Activated CD4-positive, alpha-beta memory T cell treated with anti-CD3 and anti-CD28 coated beads for 36 hours (primary cell): ENCODE measurements at regions of chr6 and their contacts with region 1.

Region 1: GRCh38 chr6:134247231-134247833 is 70.6 kb downstream of the SGK1 start:
- DNase-seq: peak; percentile 86
- H3K4me3 Mint-ChIP-seq: peak overlapping the region; percentile 20
- H3K27ac Mint-ChIP-seq: peak overlapping the region; percentile 86
- H3K4me1 Mint-ChIP-seq: peaks cover 51% of the 10 kb centered on the region
- H3K27me3 Mint-ChIP-seq: no peaks in the 10 kb centered on the region

Region 2: GRCh38 chr6:133952815-133953633 is 294.3 kb before region 1 on chr6 and contains the start of gene TBPL1:
- CTCF ChIA-PET with region 1: no interaction called
- POLR2A ChIA-PET with region 1: no interaction called
- intact Hi-C with region 1: loop called (anchors 2 kb)
- DNase-seq: peak; percentile 93
- H3K4me3 Mint-ChIP-seq: peak within 1 kb of the TSS; percentile 93
- H3K27ac Mint-ChIP-seq: peak within 1 kb of the TSS; percentile 89
- H3K4me1 Mint-ChIP-seq: peaks cover 37% of the 10 kb centered on the region
- H3K27me3 Mint-ChIP-seq: no peaks in the 10 kb centered on the region
- total RNA-seq, gene TBPL1: 31.3 to 35.7 TPM

Region 3: DNA sequence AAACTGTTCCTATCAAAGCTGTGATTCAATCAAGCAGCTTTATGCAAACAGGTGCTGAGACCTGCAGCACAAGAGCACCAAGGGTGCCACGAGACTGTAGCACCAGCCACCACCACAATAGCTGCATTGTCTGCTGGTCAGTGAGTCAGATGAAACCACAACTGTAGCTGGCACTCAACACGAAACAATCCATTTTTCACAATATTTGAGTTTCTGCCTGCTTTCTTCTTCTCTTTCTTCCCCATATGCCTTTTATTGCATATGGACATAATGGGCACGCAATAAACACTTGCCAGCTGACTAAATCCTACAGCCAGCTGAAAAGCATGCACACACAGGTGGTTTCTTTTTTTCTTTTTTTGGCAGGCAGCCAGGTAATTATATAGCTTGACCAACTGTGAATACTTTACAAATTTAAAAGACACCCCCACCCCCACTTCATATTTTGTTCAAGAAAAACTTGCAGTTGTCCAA is 211.5 kb before region 1 on chr6:
- CTCF ChIA-PET with region 1: no interaction called
- POLR2A ChIA-PET with region 1: no interaction called
- intact Hi-C with region 1: no loop called
- DNase-seq: peak; percentile 16
- H3K4me3 Mint-ChIP-seq: no peak overlapping the region
- H3K27ac Mint-ChIP-seq: no peak overlapping the region
- H3K4me1 Mint-ChIP-seq: peaks cover 10% of the 10 kb centered on the region
- H3K27me3 Mint-ChIP-seq: no peaks in the 10 kb centered on the region

Region 4: DNA sequence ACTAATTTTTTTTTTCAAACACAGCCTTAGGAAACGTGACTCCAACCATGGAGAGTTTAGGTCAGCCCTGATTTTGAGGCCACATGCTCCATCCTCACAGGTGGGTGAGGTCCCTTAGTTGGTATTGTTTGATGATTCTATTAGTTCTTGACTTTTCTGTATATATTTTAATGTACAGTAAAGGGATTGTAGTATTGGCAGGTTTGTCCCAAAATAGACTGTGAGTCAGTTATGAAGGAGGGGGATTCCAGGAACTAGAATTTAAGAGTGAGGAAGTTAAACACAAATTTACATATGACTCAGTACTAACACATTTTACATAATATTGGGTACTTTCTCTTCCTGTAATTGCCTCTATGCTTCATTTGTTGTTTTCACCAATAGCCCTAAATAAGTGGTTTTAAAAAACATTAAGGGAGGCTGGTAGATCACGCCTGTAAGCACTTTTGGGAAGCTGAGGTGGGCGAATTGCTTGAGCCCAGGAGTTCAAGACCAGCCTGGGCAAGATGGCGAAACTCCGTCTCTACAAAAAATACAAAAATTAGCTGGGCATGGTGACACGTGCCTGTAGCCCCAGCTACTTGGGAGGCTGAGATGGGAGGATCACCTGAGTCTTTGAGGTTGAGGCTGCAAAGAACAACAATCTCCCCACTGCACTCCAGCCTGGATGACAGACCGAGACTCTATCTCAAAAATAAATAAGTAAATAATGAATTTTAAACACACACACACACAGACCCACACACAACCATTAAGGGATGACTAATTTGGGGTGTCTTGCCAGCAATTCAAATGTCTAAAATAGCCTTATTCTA is 11.2 kb before region 1 on chr6:
- CTCF ChIA-PET with region 1: interaction called, 4 read pairs
- POLR2A ChIA-PET with region 1: interaction called, 4 read pairs
- intact Hi-C with region 1: loop called (anchors 1 kb)
- DNase-seq: peak; percentile 22
- H3K4me3 Mint-ChIP-seq: peak overlapping the region; percentile 29
- H3K27ac Mint-ChIP-seq: peak overlapping the region; percentile 85
- H3K4me1 Mint-ChIP-seq: peaks cover 41% of the 10 kb centered on the region
- H3K27me3 Mint-ChIP-seq: no peaks in the 10 kb centered on the region

Region 5: DNA sequence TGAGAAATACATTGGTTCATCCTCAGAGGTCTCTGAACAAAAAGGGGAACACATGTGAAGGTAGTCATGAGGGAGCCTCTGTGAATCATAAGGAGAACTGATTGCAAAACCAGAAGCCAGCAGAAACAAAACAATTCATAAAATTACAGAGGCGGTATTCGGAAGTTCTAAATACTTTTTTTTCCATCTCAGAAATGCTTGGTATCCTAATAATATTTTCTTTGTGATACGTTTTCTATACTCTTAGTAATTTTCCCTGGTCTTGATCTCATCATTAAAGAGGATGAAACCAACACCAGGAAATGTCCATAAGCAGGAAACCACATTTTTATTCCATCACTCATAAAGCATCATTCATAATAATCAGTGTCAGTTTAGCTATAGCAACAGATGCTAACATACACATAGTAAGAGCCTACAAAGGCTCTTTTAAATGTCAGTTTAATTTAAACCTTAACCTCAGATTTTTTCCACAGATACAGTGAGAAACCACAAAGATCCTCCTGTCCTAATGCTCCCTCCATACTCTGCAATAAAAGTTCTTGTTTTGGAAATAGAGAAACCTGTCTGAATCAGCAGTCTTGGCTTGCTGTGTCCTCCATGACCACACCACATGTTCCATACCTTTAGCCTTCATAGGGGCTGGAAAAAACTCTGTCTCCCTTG is 41.3 kb after region 1 on chr6:
- CTCF ChIA-PET with region 1: interaction called, 4 read pairs
- POLR2A ChIA-PET with region 1: interaction called, 4 read pairs
- intact Hi-C with region 1: loop called (anchors 1 kb)
- DNase-seq: peak; percentile 15
- H3K4me3 Mint-ChIP-seq: peak overlapping the region; percentile 21
- H3K27ac Mint-ChIP-seq: peak overlapping the region; percentile 85
- H3K4me1 Mint-ChIP-seq: peaks cover 22% of the 10 kb centered on the region
- H3K27me3 Mint-ChIP-seq: no peaks in the 10 kb centered on the region

Region 6: DNA sequence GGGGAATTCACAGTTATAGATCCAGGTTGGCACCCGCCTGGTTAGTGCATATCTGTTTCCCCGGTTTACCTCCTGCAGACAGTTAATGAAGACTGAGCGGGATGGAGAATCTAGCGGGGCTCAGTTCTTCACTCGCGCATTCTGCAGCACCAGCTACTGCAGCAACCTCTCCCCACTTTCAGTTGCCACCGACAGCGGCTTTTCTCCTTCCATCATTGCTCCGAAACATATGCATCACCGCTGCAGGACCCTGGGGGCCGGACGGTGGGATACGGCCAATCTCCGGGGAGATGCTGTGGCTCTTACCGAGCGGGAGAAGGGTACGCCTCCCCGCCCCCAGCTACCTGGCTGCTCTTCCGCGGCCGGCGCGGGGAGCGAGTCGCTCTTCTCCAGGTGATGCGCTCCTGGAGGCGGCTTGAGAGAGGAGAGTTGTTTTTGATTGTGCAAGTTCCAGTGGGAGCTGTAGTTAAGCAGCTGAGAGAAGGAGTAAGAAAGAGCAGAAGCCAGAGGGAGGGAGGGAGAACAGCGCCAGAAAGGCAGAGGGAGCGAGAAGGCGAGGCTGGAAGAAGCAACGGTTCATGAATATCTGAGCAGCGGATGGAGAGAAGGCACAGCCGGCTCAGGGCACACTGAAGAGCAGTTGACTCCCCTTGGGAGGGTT is 70.3 kb after region 1 on chr6 and contains the start of gene SGK1:
- CTCF ChIA-PET with region 1: no interaction called
- POLR2A ChIA-PET with region 1: no interaction called
- intact Hi-C with region 1: loop called (anchors 1 kb)
- DNase-seq: peak; percentile 32
- H3K4me3 Mint-ChIP-seq: peak within 1 kb of the TSS; percentile 73
- H3K27ac Mint-ChIP-seq: no peak within 1 kb of the TSS
- H3K4me1 Mint-ChIP-seq: peaks cover 15% of the 10 kb centered on the region
- H3K27me3 Mint-ChIP-seq: peaks cover 13% of the 10 kb centered on the region
- total RNA-seq, gene SGK1: 39.7 to 41.0 TPM

Region 7: DNA sequence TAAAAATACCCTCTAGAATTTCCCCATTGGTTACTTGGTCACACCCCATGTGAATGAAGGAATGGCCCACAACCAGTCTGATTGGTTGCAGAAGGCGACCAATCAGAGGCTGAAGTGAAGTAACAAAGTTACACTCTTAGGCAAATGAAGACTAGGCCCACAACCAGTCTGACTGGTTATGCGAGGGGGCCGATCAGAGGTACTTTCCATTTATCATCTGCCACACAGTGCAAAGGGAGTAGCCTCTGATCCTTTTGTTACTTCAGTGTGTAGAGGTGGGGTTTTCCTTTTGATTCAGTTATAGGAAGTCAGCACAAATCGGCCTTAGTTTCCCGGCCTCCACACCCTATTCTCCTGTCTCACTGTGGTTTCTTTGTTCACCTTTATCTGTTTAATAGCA is 131.8 kb after region 1 on chr6:
- CTCF ChIA-PET with region 1: no interaction called
- POLR2A ChIA-PET with region 1: no interaction called
- intact Hi-C with region 1: loop called (anchors 1 kb)
- DNase-seq: peak; percentile 81
- H3K4me3 Mint-ChIP-seq: peak overlapping the region; percentile 27
- H3K27ac Mint-ChIP-seq: peak overlapping the region; percentile 83
- H3K4me1 Mint-ChIP-seq: peaks cover 32% of the 10 kb centered on the region
- H3K27me3 Mint-ChIP-seq: no peaks in the 10 kb centered on the region

Region 8: GRCh38 chr6:134534708-134535149 is 287.4 kb after region 1 on chr6:
- CTCF ChIA-PET with region 1: no interaction called
- POLR2A ChIA-PET with region 1: no interaction called
- intact Hi-C with region 1: loop called (anchors 1 kb)
- DNase-seq: peak; percentile 42
- H3K4me3 Mint-ChIP-seq: no peak overlapping the region
- H3K27ac Mint-ChIP-seq: no peak overlapping the region
- H3K4me1 Mint-ChIP-seq: peaks cover 20% of the 10 kb centered on the region
- H3K27me3 Mint-ChIP-seq: no peaks in the 10 kb centered on the region